AG04449 (cell line): ENCODE measurements at regions of chr3 and their contacts with region 1.

Region 1: GRCh38 chr3:156535162-156535627 is 19.7 kb downstream of the SSR3 start:
- DNase-seq: peak; percentile 97
- H3K4me3 ChIP-seq: no peak overlapping the region
- CTCF ChIP-seq: peak; percentile 29

Region 2: GRCh38 chr3:156519758-156520162 is 15.4 kb before region 1 on chr3:
- CTCF ChIA-PET with region 1: interaction called, 12 read pairs
- POLR2A ChIA-PET with region 1: interaction called, 6 read pairs
- DNase-seq: no peak
- H3K4me3 ChIP-seq: no peak overlapping the region
- CTCF ChIP-seq: no peak

Region 3: GRCh38 chr3:156547637-156548036 is 12.4 kb after region 1 on chr3:
- CTCF ChIA-PET with region 1: interaction called, 52 read pairs
- POLR2A ChIA-PET with region 1: interaction called, 5 read pairs
- DNase-seq: no peak
- H3K4me3 ChIP-seq: no peak overlapping the region
- CTCF ChIP-seq: no peak

Region 4: DNA sequence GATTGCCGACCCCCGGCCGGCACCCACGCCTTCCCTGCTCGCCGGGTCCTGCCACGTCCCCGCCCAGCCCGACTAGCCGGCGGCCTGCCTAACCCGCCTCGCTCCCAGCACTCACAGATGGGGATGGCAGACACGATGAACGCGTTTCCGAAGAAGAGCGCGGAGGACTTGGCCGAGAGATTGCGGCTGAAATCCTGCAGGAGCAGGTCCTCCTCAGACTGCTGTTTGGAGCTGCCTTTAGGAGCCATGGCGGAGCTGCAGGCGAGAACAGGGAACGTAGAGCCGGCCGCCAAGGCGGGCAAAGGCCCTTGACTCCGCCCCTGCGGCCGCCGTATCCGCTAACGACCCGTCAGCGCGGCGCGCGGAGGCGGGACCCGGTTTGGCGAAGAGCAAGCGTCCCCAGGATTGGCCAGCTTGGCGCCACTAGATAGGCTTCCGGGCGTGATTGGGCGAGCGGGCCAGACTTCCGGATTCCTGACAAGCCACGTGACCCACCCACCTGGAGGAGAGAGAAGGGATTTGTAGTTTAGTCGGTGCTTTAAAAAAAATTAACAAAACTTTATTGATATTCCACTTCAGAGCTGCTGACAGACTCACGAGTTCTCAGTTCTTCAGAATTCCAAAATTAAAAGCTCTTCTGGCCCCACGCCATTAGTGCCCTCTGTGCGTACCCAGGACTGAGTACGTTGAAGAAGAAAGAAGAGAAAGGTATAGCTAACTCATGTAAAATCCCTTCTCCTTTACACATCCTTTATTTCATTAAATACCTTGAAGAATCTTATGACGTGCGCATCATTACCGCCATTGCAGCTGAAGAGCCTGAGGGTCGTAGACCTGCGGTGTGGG is 19.9 kb after region 1 on chr3 and contains the start of gene SSR3:
- CTCF ChIA-PET with region 1: interaction called, 52 read pairs
- POLR2A ChIA-PET with region 1: interaction called, 5 read pairs
- DNase-seq: peak; percentile 97
- H3K4me3 ChIP-seq: peak within 1 kb of the TSS; percentile 71
- CTCF ChIP-seq: no peak

Region 5: DNA sequence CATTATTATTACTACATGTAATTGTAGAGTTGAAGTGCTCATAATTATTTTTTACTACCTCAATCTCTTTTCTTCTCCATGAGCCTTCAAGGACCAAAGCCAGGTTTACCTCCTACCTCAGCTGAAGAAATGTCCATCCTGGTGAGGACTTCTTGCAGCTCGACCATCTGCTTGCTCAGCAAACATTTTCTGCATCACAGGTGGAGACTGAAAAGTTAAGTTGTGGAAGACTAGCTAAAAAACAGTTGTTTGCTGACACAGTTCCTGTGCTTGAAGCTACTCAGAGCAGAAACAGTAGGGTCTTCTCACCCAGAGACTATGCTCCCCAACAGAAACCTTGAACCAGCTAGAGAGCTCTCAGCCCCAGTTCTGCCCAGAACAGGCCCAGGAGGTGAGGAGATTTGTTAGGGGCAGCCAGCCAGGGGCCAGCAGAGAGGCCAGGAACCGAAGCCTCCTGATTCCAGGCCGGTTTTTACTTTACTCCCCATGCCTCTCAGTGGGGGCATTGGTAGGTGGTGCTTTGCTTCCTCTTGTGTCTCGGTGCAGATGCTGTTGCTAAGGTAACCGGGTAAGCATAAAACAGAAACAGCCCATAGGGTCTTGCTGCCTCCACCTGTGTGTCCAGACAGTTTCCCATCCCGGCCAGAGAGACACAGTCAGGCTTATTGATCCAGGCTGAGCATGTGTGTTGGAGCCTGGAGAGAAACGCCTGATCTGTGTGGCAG is 569.9 kb after region 1 on chr3:
- CTCF ChIA-PET with region 1: no interaction called
- POLR2A ChIA-PET with region 1: no interaction called
- DNase-seq: no peak
- H3K4me3 ChIP-seq: no peak overlapping the region
- CTCF ChIP-seq: no peak